Activated T-helper 2 cell treated with anti-CD3 and anti-CD28 coated beads, Interferon-gamma antibody, Interleukin-2, Interleukin-4, amounts not matched to agents 10 μg/mL and 5 μg/mL and 100 μg/mL, durations not matched to agents 14 hours and 24 hours and 36 hours (primary cell): ENCODE measurements at regions of chr19 and their contacts with region 1.

Region 1: GRCh38 chr19:57320180-57321084 is at the start of gene ZNF543:
- DNase-seq: peak; percentile 89
- H3K4me3 Mint-ChIP-seq: peak within 1 kb of the TSS; percentile 85
- H3K27ac Mint-ChIP-seq: peak within 1 kb of the TSS; percentile 91
- H3K4me1 Mint-ChIP-seq: peaks cover 25% of the 10 kb centered on the region
- H3K27me3 Mint-ChIP-seq: peaks cover 11% of the 10 kb centered on the region
- total RNA-seq, gene ZNF543: 4.6 and 5.1 TPM in 2 replicates

Region 2: DNA sequence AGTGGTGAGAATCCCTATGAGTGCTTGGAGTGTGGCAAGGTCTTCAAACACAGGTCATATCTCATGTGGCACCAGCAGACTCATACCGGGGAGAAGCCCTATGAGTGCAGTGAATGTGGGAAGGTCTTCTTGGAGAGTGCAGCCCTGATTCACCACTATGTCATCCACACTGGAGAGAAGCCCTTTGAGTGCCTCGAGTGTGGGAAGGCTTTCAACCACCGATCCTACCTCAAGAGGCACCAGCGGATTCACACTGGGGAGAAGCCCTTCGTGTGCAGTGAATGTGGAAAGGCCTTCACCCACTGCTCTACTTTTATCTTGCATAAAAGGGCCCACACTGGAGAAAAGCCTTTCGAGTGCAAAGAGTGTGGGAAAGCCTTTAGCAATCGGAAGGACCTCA is 108.3 kb before region 1 on chr19:
- intact Hi-C with region 1: no loop called
- DNase-seq: no peak
- H3K4me3 Mint-ChIP-seq: no peak overlapping the region
- H3K27ac Mint-ChIP-seq: no peak overlapping the region
- H3K4me1 Mint-ChIP-seq: no peaks in the 10 kb centered on the region
- H3K27me3 Mint-ChIP-seq: no peaks in the 10 kb centered on the region

Region 3: DNA sequence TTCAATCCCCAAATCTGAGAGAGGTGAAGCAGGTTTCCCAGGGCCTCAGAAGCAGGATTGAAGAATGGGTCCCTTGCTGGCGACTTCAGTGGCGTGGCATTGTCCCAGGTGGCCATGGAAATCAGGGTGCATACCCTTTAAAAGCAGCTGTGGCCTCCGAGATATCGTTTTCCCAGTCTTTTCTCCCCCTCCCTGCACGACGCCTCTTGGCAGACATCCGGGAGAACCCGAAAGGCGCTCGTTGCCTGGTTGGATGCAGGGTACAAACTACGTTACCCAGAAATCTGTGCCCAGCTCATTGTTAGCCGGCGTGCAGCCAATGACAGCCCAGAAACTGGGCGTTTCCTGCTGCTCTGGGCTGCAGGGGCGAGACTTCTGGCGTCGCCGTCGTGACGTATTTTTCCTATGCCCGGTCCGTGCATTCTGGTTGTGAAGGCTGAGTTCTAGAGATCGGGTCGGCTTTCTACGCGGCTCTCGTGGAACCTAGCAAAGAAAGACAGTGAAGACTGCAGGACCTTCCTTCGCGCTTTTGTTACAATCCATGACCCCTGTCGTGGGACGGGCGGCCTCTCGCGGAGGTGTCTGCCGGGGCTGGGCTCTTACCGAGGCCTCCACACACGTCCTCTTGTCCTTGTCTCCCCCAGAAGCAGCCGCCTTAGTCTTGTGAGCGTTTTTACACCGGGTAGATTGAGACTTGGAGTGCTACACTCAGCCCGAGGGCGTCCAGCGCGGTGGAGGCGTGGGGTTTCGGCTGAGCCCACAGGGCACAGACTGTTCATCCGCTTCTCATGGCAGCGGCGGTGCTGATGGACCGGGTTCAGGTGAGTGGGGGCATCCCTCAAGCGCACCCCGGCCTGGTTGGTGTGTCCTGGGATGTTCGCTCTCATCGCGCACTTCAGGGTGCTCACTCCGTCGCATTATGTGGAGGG is 30.7 kb after region 1 on chr19 and contains the start of gene ZNF304:
- intact Hi-C with region 1: loop called (anchors 1 kb)
- DNase-seq: peak; percentile 83
- H3K4me3 Mint-ChIP-seq: peak within 1 kb of the TSS; percentile 92
- H3K27ac Mint-ChIP-seq: peak within 1 kb of the TSS; percentile 86
- H3K4me1 Mint-ChIP-seq: peaks cover 25% of the 10 kb centered on the region
- H3K27me3 Mint-ChIP-seq: no peaks in the 10 kb centered on the region
- total RNA-seq, gene ZNF304: 5.2 and 6.5 TPM in 2 replicates

Region 4: GRCh38 chr19:57406516-57407123 is 86.2 kb after region 1 on chr19:
- intact Hi-C with region 1: no loop called
- DNase-seq: peak; percentile 48
- H3K4me3 Mint-ChIP-seq: no peak overlapping the region
- H3K27ac Mint-ChIP-seq: no peak overlapping the region
- H3K4me1 Mint-ChIP-seq: peaks cover 7% of the 10 kb centered on the region
- H3K27me3 Mint-ChIP-seq: no peaks in the 10 kb centered on the region